HepG2 (cell line): ENCODE measurements at regions of chr22 and their contacts with region 1.

Region 1: GRCh38 chr22:19178656-19179496 is at the start of gene SLC25A1:
- DNase-seq: peak; percentile 83
- ATAC-seq: peak; percentile 76
- H3K4me3 ChIP-seq: peak within 1 kb of the TSS; percentile 80 to 94 (median 92)
- H3K27ac ChIP-seq: peak within 1 kb of the TSS; percentile 95
- H3K4me1 ChIP-seq: peaks cover 54% of the 10 kb centered on the region
- H3K27me3 ChIP-seq: no peaks in the 10 kb centered on the region
- CTCF ChIP-seq: no peak
- EP300 ChIP-seq: 0 out of 4 replicates have a peak, but pooled peaks have one; percentile 9 to 10
- POLR2A ChIP-seq: peak in 1 of 2 experiments; percentile 93; a peak in 2 of 4 replicates
- RAD21 ChIP-seq: no peak; the same call in 1 of the 2 replicates
- total RNA-seq, gene SLC25A1: 118 and 161 TPM in 2 replicates

Region 2: DNA sequence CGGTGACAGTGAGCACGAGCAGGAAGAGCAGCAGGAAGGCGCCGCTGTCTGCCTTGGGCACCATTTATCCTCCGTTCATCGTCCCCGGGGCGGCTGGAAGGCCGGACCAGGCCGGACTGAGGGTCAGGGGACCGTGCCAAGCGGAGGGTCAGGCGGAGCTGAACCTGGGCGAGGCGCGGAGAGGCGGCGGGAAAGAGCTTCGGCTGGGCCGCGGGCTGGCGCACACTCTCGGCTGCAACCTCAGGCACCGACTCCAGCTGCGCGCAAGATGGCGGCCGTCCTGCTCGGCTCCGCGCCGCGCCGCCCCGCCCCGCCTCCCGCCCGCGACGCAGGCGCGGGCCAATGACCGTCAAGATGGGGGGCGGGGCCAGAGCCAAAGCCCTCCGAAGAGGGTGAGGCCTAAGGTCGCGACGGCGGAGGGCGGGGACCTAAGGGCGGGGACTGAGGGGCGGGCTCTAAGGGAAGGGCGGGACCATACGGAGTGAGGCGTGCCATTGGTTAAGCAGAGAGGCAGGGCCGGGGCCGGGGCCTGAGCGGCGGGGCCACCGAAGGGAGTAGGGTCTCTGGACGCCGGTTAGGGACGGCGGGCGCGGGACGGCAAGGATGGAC is 56.6 kb before region 1 on chr22 and contains the start of gene DGCR2:
- CTCF ChIA-PET with region 1: no interaction called
- POLR2A ChIA-PET with region 1: interaction called, 22 read pairs
- in situ Hi-C with region 1: no loop called
- intact Hi-C with region 1: no loop called
- DNase-seq: peak; percentile 91
- ATAC-seq: peak; percentile 92
- H3K4me3 ChIP-seq: peak within 1 kb of the TSS; percentile 90 to 97 (median 97)
- H3K27ac ChIP-seq: peak within 1 kb of the TSS; percentile 87
- H3K4me1 ChIP-seq: peaks cover 70% of the 10 kb centered on the region
- H3K27me3 ChIP-seq: peaks cover 2 to 30% of the 10 kb centered on the region in 2 experiments; a peak in 4 of 5 replicates
- CTCF ChIP-seq: no peak
- EP300 ChIP-seq: no peak
- POLR2A ChIP-seq: peak; percentile 63 to 94
- RAD21 ChIP-seq: no peak
- total RNA-seq, gene DGCR2: 13.1 and 35.3 TPM in 2 replicates

Region 3: DNA sequence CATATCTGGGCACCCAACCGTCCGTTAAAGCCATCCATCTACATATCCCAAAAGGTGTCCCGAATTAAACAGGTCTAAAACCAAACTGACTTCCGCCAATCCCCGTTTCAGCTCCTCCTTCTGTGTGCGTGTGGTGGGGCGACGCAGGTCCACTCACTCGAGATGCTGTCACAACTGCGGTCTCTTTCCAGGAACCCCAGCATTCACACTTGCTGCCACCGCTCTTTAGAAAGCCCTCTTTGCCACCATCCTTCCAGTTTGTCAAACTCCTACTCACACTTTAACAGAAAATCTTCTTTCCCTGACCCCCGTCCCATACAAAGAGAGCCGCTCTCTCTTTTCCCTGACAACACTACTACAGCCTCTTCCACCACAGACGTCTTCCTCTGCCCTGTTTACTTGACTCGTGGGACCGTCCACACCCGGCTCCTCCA is 34.9 kb before region 1 on chr22:
- CTCF ChIA-PET with region 1: no interaction called
- POLR2A ChIA-PET with region 1: interaction called, 22 read pairs
- in situ Hi-C with region 1: no loop called
- intact Hi-C with region 1: loop called (anchors 1 kb)
- DNase-seq: no peak
- ATAC-seq: no peak
- H3K4me3 ChIP-seq: peak overlapping the region; percentile 83 to 95 (median 90)
- H3K27ac ChIP-seq: peak overlapping the region; percentile 31
- H3K4me1 ChIP-seq: peaks cover 17% of the 10 kb centered on the region
- H3K27me3 ChIP-seq: peaks cover 4 to 31% of the 10 kb centered on the region in 2 experiments; a peak in 3 of 5 replicates
- CTCF ChIP-seq: no peak
- EP300 ChIP-seq: no peak
- POLR2A ChIP-seq: no peak
- RAD21 ChIP-seq: no peak

Region 4: GRCh38 chr22:19432133-19432851 is 253.4 kb after region 1 on chr22 and contains the start of gene MRPL40:
- CTCF ChIA-PET with region 1: no interaction called
- POLR2A ChIA-PET with region 1: no interaction called
- in situ Hi-C with region 1: no loop called
- intact Hi-C with region 1: loop called (anchors 5 kb)
- DNase-seq: peak; percentile 86
- ATAC-seq: peak; percentile 92
- H3K4me3 ChIP-seq: peak within 1 kb of the TSS; percentile 86 to 91 (median 88)
- H3K27ac ChIP-seq: peak within 1 kb of the TSS; percentile 97
- H3K4me1 ChIP-seq: peaks cover 38% of the 10 kb centered on the region
- H3K27me3 ChIP-seq: no peaks in the 10 kb centered on the region; a peak in 1 of 5 replicates
- CTCF ChIP-seq: peak; percentile 49
- EP300 ChIP-seq: peak; percentile 39 to 62; a peak in 1 of 4 replicates
- POLR2A ChIP-seq: peak; percentile 93 to 96
- RAD21 ChIP-seq: peak; percentile 69
- total RNA-seq, gene MRPL40: 79.7 and 107 TPM in 2 replicates